IMR-90 (cell line): ENCODE measurements at regions of chr18 and their contacts with region 1.

Region 1: GRCh38 chr18:9587924-9588323 is 26.4 kb downstream of the PPP4R1 start:
- DNase-seq: no peak
- ATAC-seq: no peak
- H3K4me3 ChIP-seq: no peak overlapping the region
- H3K27ac ChIP-seq: no peak overlapping the region
- H3K4me1 ChIP-seq: no peaks in the 10 kb centered on the region
- H3K27me3 ChIP-seq: no peaks in the 10 kb centered on the region
- CTCF ChIP-seq: no peak
- POLR2A ChIP-seq: no peak
- RAD21 ChIP-seq: no peak

Region 2: GRCh38 chr18:9095297-9096006 is 492.5 kb before region 1 on chr18:
- CTCF ChIA-PET with region 1: no interaction called
- POLR2A ChIA-PET with region 1: no interaction called
- dilution Hi-C with region 1: no loop called
- in situ Hi-C with region 1: no loop called
- intact Hi-C with region 1: no loop called
- DNase-seq: peak; percentile 81
- ATAC-seq: peak; percentile 21
- H3K4me3 ChIP-seq: no peak overlapping the region
- H3K27ac ChIP-seq: peak overlapping the region; percentile 84
- H3K4me1 ChIP-seq: peaks cover 13% of the 10 kb centered on the region
- H3K27me3 ChIP-seq: no peaks in the 10 kb centered on the region
- CTCF ChIP-seq: no peak
- POLR2A ChIP-seq: no peak
- RAD21 ChIP-seq: no peak

Region 3: GRCh38 chr18:9943311-9943710 is 355.4 kb after region 1 on chr18:
- CTCF ChIA-PET with region 1: no interaction called
- POLR2A ChIA-PET with region 1: no interaction called
- dilution Hi-C with region 1: no loop called
- in situ Hi-C with region 1: loop called (anchors 10 kb)
- intact Hi-C with region 1: no loop called
- DNase-seq: no peak
- ATAC-seq: no peak
- H3K4me3 ChIP-seq: no peak overlapping the region
- H3K27ac ChIP-seq: no peak overlapping the region
- H3K4me1 ChIP-seq: 0 out of 2 replicates have a peak, but pooled peaks cover 3% of the 10 kb centered on the region
- H3K27me3 ChIP-seq: no peaks in the 10 kb centered on the region
- CTCF ChIP-seq: no peak
- POLR2A ChIP-seq: no peak
- RAD21 ChIP-seq: no peak

Region 4: DNA sequence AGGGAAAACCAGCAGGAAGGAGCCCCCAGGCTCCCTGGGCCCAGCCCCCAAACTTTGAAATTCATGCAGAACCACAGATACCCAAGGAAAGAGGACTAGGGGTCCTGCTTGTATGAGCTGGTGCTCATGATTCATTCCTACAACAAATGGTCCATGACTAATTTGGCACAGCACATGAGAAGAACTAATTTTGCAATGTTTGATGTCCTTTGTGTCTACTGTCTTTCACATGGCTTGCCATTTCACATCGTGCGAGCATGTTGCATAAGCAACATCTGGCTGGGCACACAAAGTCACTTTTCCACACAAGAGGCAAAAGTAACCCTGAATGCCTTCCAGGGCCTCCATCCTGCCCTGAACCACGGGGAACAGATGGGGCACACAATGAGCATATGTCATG is 716.9 kb after region 1 on chr18:
- CTCF ChIA-PET with region 1: no interaction called
- POLR2A ChIA-PET with region 1: no interaction called
- dilution Hi-C with region 1: no loop called
- in situ Hi-C with region 1: no loop called
- intact Hi-C with region 1: no loop called
- DNase-seq: peak; percentile 79
- ATAC-seq: no peak; the same call in 1 of the 2 replicates
- H3K4me3 ChIP-seq: no peak overlapping the region
- H3K27ac ChIP-seq: no peak overlapping the region
- H3K4me1 ChIP-seq: peaks cover 2% of the 10 kb centered on the region; the same call in 1 of the 2 replicates
- H3K27me3 ChIP-seq: peaks cover 7% of the 10 kb centered on the region
- CTCF ChIP-seq: no peak
- POLR2A ChIP-seq: no peak
- RAD21 ChIP-seq: 0 out of 2 replicates have a peak, but pooled peaks have one; percentile 6